Natural killer cell (primary cell): ENCODE measurements at regions of chr10 and their contacts with region 1.

Region 1: DNA sequence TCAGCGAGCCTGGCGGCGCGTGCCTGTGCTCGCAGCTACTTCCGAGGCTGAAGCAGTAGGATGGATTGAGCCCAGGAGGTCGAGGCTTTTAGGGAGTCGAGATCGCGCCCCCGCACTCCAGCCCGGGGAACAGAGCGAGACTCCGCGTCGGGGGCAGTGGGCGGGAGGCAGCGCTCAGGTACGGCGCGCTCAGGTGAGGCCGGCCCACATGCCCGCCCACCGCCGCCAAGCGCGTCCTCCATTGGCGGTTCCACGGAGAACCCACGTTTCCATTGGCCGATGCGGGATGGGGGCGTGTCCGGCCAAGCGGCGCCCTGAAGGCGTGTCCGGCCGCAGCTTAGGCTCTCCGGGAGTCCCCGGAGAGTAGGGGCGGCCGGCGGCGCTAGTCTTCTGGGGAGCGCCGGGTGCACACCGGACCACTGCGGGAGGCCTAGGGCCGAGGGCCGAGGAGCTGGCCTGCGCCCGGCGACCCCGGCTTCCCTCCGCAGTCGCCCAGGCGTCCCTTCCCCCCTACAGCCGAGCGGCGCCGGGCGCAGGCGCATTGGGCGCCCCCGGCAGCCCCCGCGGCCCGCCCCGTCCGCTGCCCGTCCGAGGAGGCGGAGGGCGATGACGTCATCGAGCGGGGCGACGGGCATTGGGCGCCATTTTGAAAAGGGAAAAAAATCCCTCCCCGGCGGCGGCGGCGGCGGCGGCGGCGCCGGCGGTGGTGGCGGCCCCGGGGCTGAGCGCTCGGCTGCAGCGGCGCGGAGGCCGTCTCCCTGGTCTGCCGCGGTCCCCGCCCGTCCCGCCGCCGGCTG is at the start of gene PPP2R2D:
- DNase-seq: peak; percentile 96 to 98
- ATAC-seq: peak; percentile 78 to 90 (median 82)
- H3K4me3 ChIP-seq: peak within 1 kb of the TSS; percentile 55
- H3K4me3 Mint-ChIP-seq: peak within 1 kb of the TSS; percentile 89
- H3K27ac ChIP-seq: peak within 1 kb of the TSS; percentile 78
- H3K27ac Mint-ChIP-seq: peak within 1 kb of the TSS; percentile 86 to 92
- H3K4me1 ChIP-seq: peaks cover 75% of the 10 kb centered on the region
- H3K4me1 Mint-ChIP-seq: peaks cover 69 to 77% of the 10 kb centered on the region in 2 donors
- H3K27me3 ChIP-seq: no peaks in the 10 kb centered on the region
- H3K27me3 Mint-ChIP-seq: no peaks in the 10 kb centered on the region
- CTCF ChIP-seq: no peak
- total RNA-seq, gene PPP2R2D: 28.6 to 39.8 (median 35.8) TPM

Region 2: GRCh38 chr10:130727766-130728490 is 1172.6 kb before region 1 on chr10:
- intact Hi-C with region 1: no loop called
- DNase-seq: no peak
- ATAC-seq: no peak
- H3K4me3 ChIP-seq: no peak overlapping the region
- H3K4me3 Mint-ChIP-seq: no peak overlapping the region
- H3K27ac ChIP-seq: no peak overlapping the region
- H3K27ac Mint-ChIP-seq: no peak overlapping the region
- H3K4me1 ChIP-seq: no peaks in the 10 kb centered on the region
- H3K4me1 Mint-ChIP-seq: no peaks in the 10 kb centered on the region
- H3K27me3 ChIP-seq: no peaks in the 10 kb centered on the region
- H3K27me3 Mint-ChIP-seq: peaks cover 0 to 3% of the 10 kb centered on the region in 2 donors
- CTCF ChIP-seq: no peak

Region 3: GRCh38 chr10:131819241-131820072 is 81.1 kb before region 1 on chr10:
- intact Hi-C with region 1: no loop called
- DNase-seq: no peak
- ATAC-seq: no peak
- H3K4me3 ChIP-seq: no peak overlapping the region
- H3K4me3 Mint-ChIP-seq: no peak overlapping the region
- H3K27ac ChIP-seq: no peak overlapping the region
- H3K27ac Mint-ChIP-seq: no peak overlapping the region
- H3K4me1 ChIP-seq: no peaks in the 10 kb centered on the region
- H3K4me1 Mint-ChIP-seq: no peaks in the 10 kb centered on the region
- H3K27me3 ChIP-seq: no peaks in the 10 kb centered on the region
- H3K27me3 Mint-ChIP-seq: no peaks in the 10 kb centered on the region
- CTCF ChIP-seq: no peak

Region 4: GRCh38 chr10:131885391-131886161 is 15.0 kb before region 1 on chr10:
- intact Hi-C with region 1: no loop called
- DNase-seq: peak; percentile 81 to 89
- ATAC-seq: peak; percentile 93 to 99 (median 98)
- H3K4me3 ChIP-seq: no peak overlapping the region
- H3K4me3 Mint-ChIP-seq: no peak overlapping the region
- H3K27ac ChIP-seq: no peak overlapping the region
- H3K27ac Mint-ChIP-seq: no peak overlapping the region
- H3K4me1 ChIP-seq: peaks cover 6% of the 10 kb centered on the region
- H3K4me1 Mint-ChIP-seq: peaks cover 4 to 9% of the 10 kb centered on the region in 2 donors
- H3K27me3 ChIP-seq: no peaks in the 10 kb centered on the region
- H3K27me3 Mint-ChIP-seq: peaks cover 0 to 6% of the 10 kb centered on the region in 2 donors
- CTCF ChIP-seq: peak; percentile 96

Region 5: GRCh38 chr10:131981429-131982184 is 81.1 kb after region 1 on chr10 and contains the start of gene BNIP3:
- intact Hi-C with region 1: loop called (anchors 2 kb)
- DNase-seq: peak; percentile 87 to 98
- ATAC-seq: peak; percentile 87 to 91 (median 90)
- H3K4me3 ChIP-seq: peak within 1 kb of the TSS; percentile 52
- H3K4me3 Mint-ChIP-seq: peak within 1 kb of the TSS; percentile 83
- H3K27ac ChIP-seq: no peak within 1 kb of the TSS
- H3K27ac Mint-ChIP-seq: peak within 1 kb of the TSS in 1 of 2 donors; percentile 81
- H3K4me1 ChIP-seq: peaks cover 13% of the 10 kb centered on the region
- H3K4me1 Mint-ChIP-seq: peaks cover 14 to 36% of the 10 kb centered on the region in 2 donors
- H3K27me3 ChIP-seq: no peaks in the 10 kb centered on the region
- H3K27me3 Mint-ChIP-seq: no peaks in the 10 kb centered on the region
- CTCF ChIP-seq: no peak
- total RNA-seq, gene BNIP3: 9.9 to 12.9 (median 12.1) TPM

Region 6: DNA sequence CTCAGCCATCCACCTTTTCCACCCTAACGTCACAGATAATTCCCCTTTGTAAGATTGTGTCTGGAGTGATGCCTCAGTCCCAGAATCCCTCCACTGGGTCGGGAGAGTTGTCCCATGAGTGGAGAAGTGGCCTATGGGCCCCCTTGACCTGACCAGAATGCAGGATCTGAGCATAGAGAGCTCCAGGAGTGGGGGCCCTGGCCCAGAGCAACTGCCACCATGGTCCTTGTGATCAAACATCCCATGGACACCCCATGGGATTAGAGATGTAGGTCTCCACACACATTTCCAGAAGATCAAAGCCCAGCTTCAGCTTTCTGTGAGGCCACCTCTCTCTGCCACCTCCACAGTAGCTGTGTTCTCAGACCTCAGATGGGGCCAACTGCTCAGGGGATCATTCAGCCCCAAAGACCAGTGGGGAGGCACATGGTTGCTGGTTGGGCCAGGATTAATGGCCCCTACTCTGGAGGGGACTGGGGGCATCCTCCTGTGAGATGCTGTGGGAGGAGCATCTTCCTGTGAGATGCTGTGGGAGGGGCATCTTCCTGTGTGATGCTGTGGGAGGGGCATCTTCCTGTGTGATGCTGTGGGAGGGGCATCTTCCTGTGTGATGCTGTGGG is 257.7 kb after region 1 on chr10:
- intact Hi-C with region 1: loop called (anchors 5 kb)
- DNase-seq: peak; percentile 39 to 74
- ATAC-seq: peak; percentile 44 to 60 (median 51)
- H3K4me3 ChIP-seq: no peak overlapping the region
- H3K4me3 Mint-ChIP-seq: no peak overlapping the region
- H3K27ac ChIP-seq: peak overlapping the region; percentile 97
- H3K27ac Mint-ChIP-seq: peak overlapping the region; percentile 89 to 98
- H3K4me1 ChIP-seq: peaks cover 35% of the 10 kb centered on the region
- H3K4me1 Mint-ChIP-seq: peaks cover 17 to 36% of the 10 kb centered on the region in 2 donors
- H3K27me3 ChIP-seq: no peaks in the 10 kb centered on the region
- H3K27me3 Mint-ChIP-seq: no peaks in the 10 kb centered on the region
- CTCF ChIP-seq: no peak